ENCODE measurements at regions of chr20 and their contacts with region 1.

Region 1: GRCh38 chr20:32109392-32110172 is at the start of gene TM9SF4:
- DNase-seq: peak; percentile 93
- ATAC-seq: peak; percentile 88
- H3K4me3 Mint-ChIP-seq: peak within 1 kb of the TSS; percentile 97
- H3K27ac Mint-ChIP-seq: peak within 1 kb of the TSS; percentile 99
- H3K4me1 Mint-ChIP-seq: peaks cover 34% of the 10 kb centered on the region
- H3K27me3 Mint-ChIP-seq: no peaks in the 10 kb centered on the region
- total RNA-seq, gene TM9SF4: 43.2 to 66.5 TPM

Region 2: GRCh38 chr20:31738729-31739561 is 370.6 kb before region 1 on chr20 and contains the start of gene TPX2:
- CTCF ChIA-PET with region 1: no interaction called
- POLR2A ChIA-PET with region 1: no interaction called
- intact Hi-C with region 1: loop called in 1 of 2 experiments (anchors 1 kb)
- DNase-seq: peak; percentile 92
- ATAC-seq: peak; percentile 97
- H3K4me3 Mint-ChIP-seq: no peak within 1 kb of the TSS
- H3K27ac Mint-ChIP-seq: no peak within 1 kb of the TSS
- H3K4me1 Mint-ChIP-seq: peaks cover 2% of the 10 kb centered on the region
- H3K27me3 Mint-ChIP-seq: no peaks in the 10 kb centered on the region
- total RNA-seq, gene TPX2: 137 to 179 TPM

Region 3: DNA sequence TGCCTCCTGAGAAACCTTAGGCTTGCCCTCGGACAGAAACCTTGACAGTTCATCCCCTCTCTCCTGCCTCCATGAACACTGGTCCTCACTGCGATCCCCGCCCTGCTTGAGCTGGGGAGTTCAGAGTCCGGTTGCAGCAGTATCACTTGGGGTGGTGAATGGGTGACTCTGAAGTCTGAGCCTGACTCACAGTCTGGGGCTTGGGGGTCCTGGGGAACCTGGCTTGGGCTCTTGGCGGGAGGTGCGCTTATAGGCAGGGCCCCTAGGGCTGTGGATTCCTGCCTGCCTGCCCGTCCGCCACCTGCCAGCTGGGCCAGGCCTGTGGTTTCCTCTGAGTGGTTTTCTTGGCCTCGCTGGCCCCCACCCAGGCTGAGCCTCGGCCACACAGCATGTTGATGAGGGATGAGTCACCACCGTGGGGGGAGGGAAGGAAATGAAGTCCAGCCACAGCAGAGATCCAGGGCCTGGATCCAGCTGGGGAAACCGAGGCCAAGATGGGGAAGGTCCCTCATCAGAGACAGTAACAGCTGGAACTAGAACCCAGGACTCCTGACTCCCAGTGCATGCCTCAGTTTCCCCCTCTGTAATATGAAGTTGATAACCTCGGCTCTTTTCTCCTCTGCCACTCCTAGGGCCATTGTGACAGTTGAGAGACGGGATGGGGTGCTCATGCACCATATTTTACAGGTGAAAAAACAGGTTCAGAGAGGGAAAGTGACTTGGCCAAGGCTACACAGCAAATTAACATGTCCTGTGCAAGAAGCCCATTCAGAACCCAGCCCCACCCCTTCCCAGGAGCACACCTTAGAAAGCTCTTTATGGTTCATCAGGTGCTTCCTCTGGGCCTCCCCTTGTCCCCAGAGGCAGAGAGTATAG is 273.4 kb before region 1 on chr20:
- CTCF ChIA-PET with region 1: no interaction called
- POLR2A ChIA-PET with region 1: no interaction called
- intact Hi-C with region 1: no loop called
- DNase-seq: peak; percentile 42
- ATAC-seq: peak; percentile 60
- H3K4me3 Mint-ChIP-seq: no peak overlapping the region
- H3K27ac Mint-ChIP-seq: no peak overlapping the region
- H3K4me1 Mint-ChIP-seq: peaks cover 5% of the 10 kb centered on the region
- H3K27me3 Mint-ChIP-seq: no peaks in the 10 kb centered on the region

Region 4: DNA sequence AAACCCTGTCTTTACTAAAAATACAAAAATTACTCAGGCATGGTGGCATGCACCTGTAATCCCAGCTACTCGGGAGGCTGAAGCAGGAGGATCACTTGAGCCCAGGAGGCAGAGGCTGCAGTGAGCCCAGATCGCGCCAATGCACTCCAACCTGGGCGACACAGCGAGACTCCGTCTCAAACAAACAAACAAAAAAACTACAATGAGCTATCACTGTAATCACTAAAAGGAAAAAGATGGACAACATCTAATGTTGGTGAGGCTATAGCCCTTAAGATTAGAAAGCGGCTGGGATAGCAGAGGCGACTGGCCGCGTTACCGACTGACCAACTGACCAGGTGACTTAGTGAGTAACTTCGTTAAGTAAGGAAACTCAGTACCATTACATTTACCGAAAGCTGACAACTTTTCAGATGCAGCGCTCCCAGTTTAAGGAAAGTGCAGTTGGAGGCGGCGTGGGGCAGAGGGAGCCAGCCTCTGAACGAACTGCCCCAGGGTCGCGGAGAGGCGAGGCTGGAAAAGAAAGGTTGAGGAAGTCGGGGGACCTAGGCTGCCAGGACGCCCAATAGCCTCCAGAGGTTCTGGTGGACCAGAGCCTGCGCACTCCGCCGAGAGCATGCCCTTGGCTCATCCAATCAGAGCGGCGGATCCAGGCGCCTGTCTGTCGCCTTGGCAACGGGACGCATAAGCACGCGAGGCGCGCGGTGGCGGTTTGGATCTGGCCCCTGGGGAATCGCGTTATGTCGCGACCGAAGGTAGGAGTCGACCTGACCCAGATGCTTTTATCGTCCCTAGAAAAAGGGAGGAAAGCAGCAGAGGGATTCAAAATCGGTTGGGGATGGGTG is 230.2 kb before region 1 on chr20:
- CTCF ChIA-PET with region 1: no interaction called
- POLR2A ChIA-PET with region 1: no interaction called
- intact Hi-C with region 1: loop called in 1 of 2 experiments (anchors 1 kb)
- DNase-seq: peak; percentile 90
- ATAC-seq: peak; percentile 94
- H3K4me3 Mint-ChIP-seq: peak overlapping the region; percentile 84
- H3K27ac Mint-ChIP-seq: peak overlapping the region; percentile 45
- H3K4me1 Mint-ChIP-seq: peaks cover 8% of the 10 kb centered on the region
- H3K27me3 Mint-ChIP-seq: no peaks in the 10 kb centered on the region

Region 5: GRCh38 chr20:31920102-31920855 is 189.3 kb before region 1 on chr20:
- CTCF ChIA-PET with region 1: no interaction called
- POLR2A ChIA-PET with region 1: no interaction called
- intact Hi-C with region 1: no loop called
- DNase-seq: no peak
- ATAC-seq: no peak
- H3K4me3 Mint-ChIP-seq: no peak overlapping the region
- H3K27ac Mint-ChIP-seq: no peak overlapping the region
- H3K4me1 Mint-ChIP-seq: no peaks in the 10 kb centered on the region
- H3K27me3 Mint-ChIP-seq: peaks cover 19% of the 10 kb centered on the region

Region 6: GRCh38 chr20:32277361-32278198 is 168.0 kb after region 1 on chr20 and contains the start of gene KIF3B:
- CTCF ChIA-PET with region 1: no interaction called
- POLR2A ChIA-PET with region 1: no interaction called
- intact Hi-C with region 1: loop called in 1 of 2 experiments (anchors 1 kb)
- DNase-seq: peak; percentile 93
- ATAC-seq: peak; percentile 81
- H3K4me3 Mint-ChIP-seq: peak within 1 kb of the TSS; percentile 91
- H3K27ac Mint-ChIP-seq: peak within 1 kb of the TSS; percentile 98
- H3K4me1 Mint-ChIP-seq: peaks cover 58% of the 10 kb centered on the region
- H3K27me3 Mint-ChIP-seq: no peaks in the 10 kb centered on the region
- total RNA-seq, gene KIF3B: 39.9 to 40.7 TPM

Region 7: DNA sequence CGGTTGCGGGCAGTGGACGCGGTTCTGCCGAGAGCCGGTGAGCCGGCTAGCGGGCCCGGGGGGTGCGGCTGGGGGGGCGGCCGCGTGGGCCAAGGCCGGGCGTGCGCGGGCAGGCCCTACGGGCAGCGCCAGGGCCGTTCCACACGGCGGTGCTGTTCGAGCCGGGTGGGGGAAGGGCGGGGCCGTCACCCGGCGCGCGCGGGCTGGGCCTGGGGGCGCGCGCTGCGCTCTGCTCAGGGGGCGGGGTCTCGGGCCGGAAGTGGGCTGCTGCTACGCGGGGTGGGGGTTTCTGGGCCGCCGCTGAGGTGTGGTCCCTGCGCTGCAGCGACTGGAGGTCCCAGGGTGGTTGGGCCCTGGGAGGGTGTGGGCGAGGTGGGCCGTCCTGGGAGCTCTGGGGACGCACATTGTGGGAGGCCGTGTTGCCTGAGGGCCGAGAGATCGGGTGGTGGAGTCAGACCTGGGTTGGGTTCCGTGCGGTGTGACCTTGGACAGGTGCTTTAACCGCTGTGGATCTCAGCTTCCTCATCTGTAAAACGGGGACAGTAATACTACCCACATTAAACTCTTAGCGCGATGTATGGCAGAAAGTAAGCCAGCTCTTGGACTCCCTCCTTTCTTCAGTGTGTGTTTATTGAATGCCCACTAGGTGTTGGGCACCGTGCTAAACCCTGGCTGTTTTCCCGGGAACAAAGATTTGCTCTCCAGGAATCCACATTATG is 710.6 kb after region 1 on chr20:
- CTCF ChIA-PET with region 1: no interaction called
- POLR2A ChIA-PET with region 1: no interaction called
- intact Hi-C with region 1: loop called in 1 of 2 experiments (anchors 1 kb)
- DNase-seq: peak; percentile 85
- ATAC-seq: peak; percentile 76
- H3K4me3 Mint-ChIP-seq: peak overlapping the region; percentile 87
- H3K27ac Mint-ChIP-seq: peak overlapping the region; percentile 92
- H3K4me1 Mint-ChIP-seq: peaks cover 37% of the 10 kb centered on the region
- H3K27me3 Mint-ChIP-seq: no peaks in the 10 kb centered on the region